ENCODE measurements at regions of chr10 and their contacts with region 1.

Region 1: GRCh38 chr10:124732931-124733570 is 11.1 kb downstream of the FAM53B start:
- DNase-seq: peak; percentile 87
- ATAC-seq: peak; percentile 71
- H3K4me3 Mint-ChIP-seq: peak overlapping the region; percentile 43
- H3K27ac Mint-ChIP-seq: peak overlapping the region; percentile 76
- H3K4me1 Mint-ChIP-seq: peaks cover 84% of the 10 kb centered on the region
- H3K27me3 Mint-ChIP-seq: no peaks in the 10 kb centered on the region

Region 2: DNA sequence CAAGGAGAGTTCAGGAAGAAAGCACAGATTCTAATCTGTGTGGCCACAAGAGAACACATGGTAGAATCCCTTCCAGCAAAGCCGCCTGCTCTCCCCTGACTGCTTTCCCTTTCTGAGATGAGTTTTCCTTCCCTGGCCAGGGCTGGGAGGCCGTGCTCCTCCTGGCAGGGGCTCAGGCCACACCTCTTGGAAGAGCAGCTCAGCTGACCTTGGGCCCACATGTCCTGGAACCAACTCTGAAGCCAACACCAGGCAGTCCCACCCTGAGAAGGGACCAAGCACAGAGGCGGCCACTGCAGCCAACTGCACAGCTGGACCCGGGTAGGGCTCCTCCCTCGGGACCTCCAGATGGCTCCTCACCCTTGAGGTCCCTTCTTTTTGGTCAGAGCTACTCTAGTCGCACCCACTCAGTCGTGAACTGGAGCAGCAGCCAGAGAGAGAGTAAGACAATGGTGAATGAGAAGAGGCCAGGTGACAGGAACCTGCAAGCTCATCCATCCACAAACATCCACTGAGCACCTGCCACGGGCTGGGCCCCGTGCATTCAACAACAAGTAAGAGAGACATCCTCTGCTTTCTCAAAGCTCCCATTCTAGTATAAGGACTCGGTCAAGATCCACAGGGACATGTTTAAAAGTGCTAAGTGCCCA is 29.1 kb before region 1 on chr10:
- CTCF ChIA-PET with region 1: interaction called, 4 read pairs
- POLR2A ChIA-PET with region 1: interaction called, 10 read pairs
- intact Hi-C with region 1: no loop called
- DNase-seq: no peak
- ATAC-seq: no peak
- H3K4me3 Mint-ChIP-seq: no peak overlapping the region
- H3K27ac Mint-ChIP-seq: peak overlapping the region; percentile 75
- H3K4me1 Mint-ChIP-seq: peaks cover 93% of the 10 kb centered on the region
- H3K27me3 Mint-ChIP-seq: no peaks in the 10 kb centered on the region

Measured in activated CD4-positive, alpha-beta T cell treated with anti-CD3 and anti-CD28 coated beads for 36 hours (primary cell).